Mammary epithelial cell (primary cell): ENCODE measurements at regions of chr1 and their contacts with region 1.

Region 1: GRCh38 chr1:197515421-197515820 is 247.4 kb downstream of the CRB1 start:
- DNase-seq: no peak
- H3K4me3 ChIP-seq: no peak overlapping the region
- H3K27ac ChIP-seq: no peak overlapping the region
- H3K4me1 ChIP-seq: no peaks in the 10 kb centered on the region
- H3K27me3 ChIP-seq: no peaks in the 10 kb centered on the region
- CTCF ChIP-seq: no peak

Region 2: GRCh38 chr1:197399755-197400527 is 115.5 kb before region 1 on chr1:
- CTCF ChIA-PET with region 1: interaction called, 18 read pairs
- dilution Hi-C with region 1: no loop called
- in situ Hi-C with region 1: no loop called
- intact Hi-C with region 1: no loop called
- DNase-seq: peak; percentile 42
- H3K4me3 ChIP-seq: no peak overlapping the region
- H3K27ac ChIP-seq: no peak overlapping the region
- H3K4me1 ChIP-seq: no peaks in the 10 kb centered on the region
- H3K27me3 ChIP-seq: peaks cover 3% of the 10 kb centered on the region
- CTCF ChIP-seq: peak; percentile 69 to 79

Region 3: DNA sequence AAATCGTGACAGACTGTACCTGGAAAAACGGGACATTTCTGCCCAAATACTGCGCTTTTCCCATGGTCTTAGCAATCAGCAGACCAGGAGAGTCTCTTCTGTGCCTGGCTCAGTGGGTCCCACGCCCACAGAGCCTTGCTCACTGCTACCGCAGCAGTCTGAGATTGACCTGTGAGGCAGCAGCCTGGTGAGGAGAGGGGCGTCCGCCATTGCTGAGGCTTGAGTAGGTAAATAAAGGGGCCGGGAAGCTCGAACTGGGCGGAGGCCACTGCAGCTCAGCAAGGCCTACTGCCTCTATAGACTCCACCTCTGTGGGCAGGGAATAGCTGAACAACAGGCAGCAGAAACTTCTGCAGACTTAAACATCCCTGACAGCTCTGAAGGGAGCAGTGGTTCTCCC is 56.7 kb after region 1 on chr1:
- CTCF ChIA-PET with region 1: no interaction called
- dilution Hi-C with region 1: no loop called
- in situ Hi-C with region 1: no loop called
- intact Hi-C with region 1: no loop called
- DNase-seq: no peak
- H3K4me3 ChIP-seq: no peak overlapping the region
- H3K27ac ChIP-seq: no peak overlapping the region
- H3K4me1 ChIP-seq: no peaks in the 10 kb centered on the region
- H3K27me3 ChIP-seq: no peaks in the 10 kb centered on the region
- CTCF ChIP-seq: no peak